A673 (cell line): ENCODE measurements at regions of chr22 and their contacts with region 1.

Region 1: DNA sequence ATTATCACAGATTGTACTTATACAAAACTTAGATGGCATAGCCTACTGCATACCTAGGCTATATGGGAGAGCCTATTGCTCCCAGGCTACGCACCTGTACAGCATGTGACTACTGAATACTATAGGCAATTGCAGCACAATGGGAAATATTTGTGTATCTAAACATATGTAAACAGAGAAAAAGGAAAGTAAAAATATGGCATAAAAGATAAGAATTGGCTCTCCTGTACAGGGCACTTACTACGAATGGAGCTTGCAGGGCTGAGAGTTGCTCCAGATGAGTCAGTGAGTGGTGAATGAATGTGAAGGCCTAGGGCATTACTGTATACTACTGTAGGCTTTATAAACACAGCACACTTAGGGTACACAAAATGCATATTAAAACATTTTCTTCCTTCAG is 13.2 kb downstream of the APOL6 start:
- DNase-seq: no peak
- H3K4me3 ChIP-seq: no peak overlapping the region
- H3K27ac ChIP-seq: peak overlapping the region; percentile 94
- H3K4me1 ChIP-seq: peaks cover 32% of the 10 kb centered on the region
- H3K27me3 ChIP-seq: no peaks in the 10 kb centered on the region
- CTCF ChIP-seq: no peak

Region 2: DNA sequence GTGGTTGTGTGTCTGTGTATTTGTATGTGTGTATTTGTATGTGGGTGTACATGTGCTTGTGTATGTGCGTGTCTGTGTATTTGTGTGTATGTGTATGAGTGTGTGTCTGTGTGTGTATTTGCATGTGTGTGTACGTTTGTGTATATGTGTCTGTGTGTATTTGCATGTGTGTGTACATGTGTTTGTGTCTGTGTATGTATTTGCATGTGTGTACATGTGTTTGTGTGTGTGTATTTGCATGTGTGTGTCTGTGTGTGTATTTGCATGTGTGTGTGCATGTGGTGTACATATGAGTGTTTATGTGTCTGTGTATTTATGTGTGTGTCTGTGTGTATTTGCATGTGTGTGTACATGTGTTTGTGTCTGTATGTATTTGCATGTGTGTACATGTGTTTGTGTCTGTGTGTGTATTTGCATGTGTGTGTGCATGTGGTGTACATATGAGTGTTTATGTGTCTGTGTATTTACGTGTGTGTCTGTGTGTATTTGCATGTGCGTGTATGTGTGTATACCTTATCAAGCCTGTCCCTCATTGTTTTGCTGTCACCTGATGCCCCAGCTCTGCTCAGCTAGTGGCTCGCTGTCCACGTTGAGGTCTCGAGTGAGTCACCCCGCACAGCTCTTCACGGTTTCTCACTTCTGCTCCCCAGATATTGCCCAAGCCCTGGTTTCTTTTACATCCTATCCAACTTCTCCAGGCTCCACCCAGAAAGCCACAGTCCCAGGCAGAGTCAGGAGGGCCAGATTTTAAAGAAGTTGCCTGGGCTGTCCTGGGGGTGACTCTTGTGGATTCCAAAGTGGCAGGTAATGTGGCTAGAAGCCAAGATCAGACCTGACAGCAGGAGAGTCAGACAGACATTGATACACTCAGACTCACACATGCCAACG is 59.5 kb before region 1 on chr22:
- CTCF ChIA-PET with region 1: no interaction called
- POLR2A ChIA-PET with region 1: no interaction called
- intact Hi-C with region 1: no loop called
- DNase-seq: no peak
- H3K4me3 ChIP-seq: no peak overlapping the region
- H3K27ac ChIP-seq: no peak overlapping the region
- H3K4me1 ChIP-seq: no peaks in the 10 kb centered on the region
- H3K27me3 ChIP-seq: no peaks in the 10 kb centered on the region
- CTCF ChIP-seq: no peak

Region 3: GRCh38 chr22:35712672-35713071 is 51.2 kb after region 1 on chr22:
- CTCF ChIA-PET with region 1: no interaction called
- POLR2A ChIA-PET with region 1: no interaction called
- intact Hi-C with region 1: loop called (anchors 2 kb)
- DNase-seq: no peak
- H3K4me3 ChIP-seq: no peak overlapping the region
- H3K27ac ChIP-seq: no peak overlapping the region
- H3K4me1 ChIP-seq: peaks cover 4% of the 10 kb centered on the region
- H3K27me3 ChIP-seq: no peaks in the 10 kb centered on the region
- CTCF ChIP-seq: 0 out of 2 replicates have a peak, but pooled peaks have one; percentile 7

Region 4: DNA sequence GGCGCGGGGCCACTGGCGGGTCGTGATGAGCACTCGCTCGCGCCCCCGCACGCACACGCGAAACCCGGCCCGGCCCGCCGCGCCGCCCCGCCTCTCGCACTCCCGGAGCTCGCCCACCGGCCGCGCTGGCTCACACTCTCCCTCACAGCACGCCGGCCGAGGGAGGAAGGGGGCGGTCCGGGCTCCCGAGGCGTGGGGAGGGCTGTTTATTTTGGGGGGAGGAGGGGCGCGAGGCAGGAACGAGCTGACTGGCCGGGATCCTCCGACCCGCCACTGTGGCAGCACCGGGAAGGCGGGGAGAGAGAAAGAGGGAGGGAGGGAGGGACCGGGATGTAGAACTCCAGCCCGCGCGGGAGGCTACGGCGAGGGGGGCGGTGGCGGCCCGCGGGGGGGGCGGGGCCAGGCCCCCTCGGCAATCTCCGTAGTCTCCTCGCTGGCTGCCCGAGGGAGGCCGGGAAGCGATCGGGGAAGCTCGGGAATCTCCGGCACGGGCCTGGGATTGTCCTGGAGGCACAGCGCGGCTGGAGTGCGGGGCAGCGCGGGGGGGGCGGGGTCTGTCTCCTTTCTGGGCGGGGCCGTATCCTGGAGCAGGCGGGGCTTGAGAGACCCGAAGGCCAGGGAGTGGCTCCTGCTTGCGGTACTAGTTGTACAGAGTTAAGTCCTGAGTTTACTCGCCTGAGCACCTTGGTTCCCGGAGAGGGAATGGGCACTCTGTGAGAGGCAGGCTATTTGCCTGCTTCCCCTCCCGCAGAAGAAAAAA is 367.4 kb after region 1 on chr22 and contains the start of gene RBFOX2:
- CTCF ChIA-PET with region 1: no interaction called
- POLR2A ChIA-PET with region 1: no interaction called
- intact Hi-C with region 1: no loop called
- DNase-seq: peak; percentile 97
- H3K4me3 ChIP-seq: peak within 1 kb of the TSS; percentile 89
- H3K27ac ChIP-seq: peak within 1 kb of the TSS; percentile 84
- H3K4me1 ChIP-seq: peaks cover 21% of the 10 kb centered on the region
- H3K27me3 ChIP-seq: no peaks in the 10 kb centered on the region
- CTCF ChIP-seq: no peak
- total RNA-seq, gene RBFOX2: 142 and 154 TPM in 2 replicates